H1 (cell line): ENCODE measurements at regions of chr2 and their contacts with region 1.

Region 1: GRCh38 chr2:20446917-20447436 is at the start of gene RHOB:
- DNase-seq: peak; percentile 94 to 95
- H3K4me3 ChIP-seq: peak within 1 kb of the TSS; percentile 61 to 73 (median 66)
- H3K27ac ChIP-seq: no peak within 1 kb of the TSS; the same call in 1 of the 2 replicates
- H3K4me1 ChIP-seq: peaks cover 9 to 16% (median 13%) of the 10 kb centered on the region in 4 experiments
- H3K27me3 ChIP-seq: peaks cover 15 to 49% (median 37%) of the 10 kb centered on the region in 4 experiments
- CTCF ChIP-seq: no peak
- EP300 ChIP-seq: no peak
- POLR2A ChIP-seq: peak; percentile 96 to 99
- RAD21 ChIP-seq: 0 out of 4 replicates have a peak, but pooled peaks of 1 of the 2 experiments have one; percentile 2
- total RNA-seq, gene RHOB: 9.5 and 13.5 TPM in 2 replicates

Region 2: GRCh38 chr2:20378792-20379519 is 68.0 kb before region 1 on chr2:
- CTCF ChIA-PET with region 1: interaction called, 11 read pairs
- POLR2A ChIA-PET with region 1: interaction called, 10 read pairs
- DNase-seq: peak; percentile 34 to 86
- H3K4me3 ChIP-seq: no peak overlapping the region
- H3K27ac ChIP-seq: no peak overlapping the region
- H3K4me1 ChIP-seq: peaks cover 0 to 5% (median 2%) of the 10 kb centered on the region in 4 experiments; a peak in 5 of 7 replicates
- H3K27me3 ChIP-seq: no peaks in the 10 kb centered on the region
- CTCF ChIP-seq: peak; percentile 77 to 87 (median 85)
- EP300 ChIP-seq: no peak
- POLR2A ChIP-seq: no peak
- RAD21 ChIP-seq: peak; percentile 81 to 85

Region 3: DNA sequence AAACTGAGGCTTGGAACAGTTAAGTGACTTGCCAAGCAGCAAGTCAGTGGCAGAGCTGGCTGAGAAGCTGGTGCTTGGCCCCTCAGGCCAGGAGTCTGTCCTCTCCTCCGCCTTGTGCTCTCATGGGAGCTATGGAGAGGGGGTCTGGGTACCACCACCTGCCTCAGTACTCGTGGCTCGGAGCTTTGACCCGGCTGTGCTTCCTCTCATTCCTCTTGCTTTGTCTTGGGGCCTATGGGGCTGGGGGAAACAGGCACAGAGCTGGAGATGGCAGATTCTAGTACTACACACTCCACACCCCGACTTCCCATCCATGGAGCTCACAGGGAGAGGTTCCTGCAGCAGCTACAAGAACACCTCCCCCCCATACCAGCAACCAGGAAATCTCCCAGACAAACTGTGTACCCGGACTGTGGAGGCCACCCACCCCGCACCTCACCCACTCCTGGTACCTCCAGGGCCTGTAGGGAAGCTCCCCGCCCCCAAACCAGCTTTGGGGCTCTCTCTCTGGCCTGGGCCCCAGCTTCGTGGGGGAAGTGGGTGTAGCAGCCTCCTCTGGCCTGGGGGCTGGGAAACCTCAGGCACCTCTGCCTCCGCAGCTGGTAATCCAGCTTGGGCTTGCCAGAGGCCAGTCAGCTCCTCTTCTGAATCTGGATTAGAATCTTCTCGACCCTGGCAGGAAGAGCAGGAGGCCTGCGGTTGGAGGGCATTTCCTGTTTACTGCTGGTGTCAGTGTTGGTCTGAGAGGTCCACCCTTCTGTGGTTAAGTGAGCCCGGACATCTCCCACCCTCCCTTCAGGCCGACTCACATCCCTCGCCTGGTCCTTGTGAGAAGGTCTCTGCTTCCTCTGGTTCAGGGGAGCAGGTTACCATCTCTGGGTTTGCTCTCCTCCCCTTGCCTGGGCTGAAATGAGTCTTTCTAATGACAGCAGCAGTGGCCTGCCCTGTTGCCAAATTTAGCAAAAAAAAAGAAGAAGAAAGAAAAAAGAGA is 22.4 kb before region 1 on chr2:
- CTCF ChIA-PET with region 1: interaction called, 129 read pairs
- POLR2A ChIA-PET with region 1: interaction called, 12 read pairs
- DNase-seq: no peak
- H3K4me3 ChIP-seq: no peak overlapping the region
- H3K27ac ChIP-seq: no peak overlapping the region; the same call in 1 of the 2 replicates
- H3K4me1 ChIP-seq: no peaks in the 10 kb centered on the region; a peak in 1 of 7 replicates
- H3K27me3 ChIP-seq: no peaks in the 10 kb centered on the region
- CTCF ChIP-seq: no peak
- EP300 ChIP-seq: no peak
- POLR2A ChIP-seq: no peak
- RAD21 ChIP-seq: no peak

Region 4: DNA sequence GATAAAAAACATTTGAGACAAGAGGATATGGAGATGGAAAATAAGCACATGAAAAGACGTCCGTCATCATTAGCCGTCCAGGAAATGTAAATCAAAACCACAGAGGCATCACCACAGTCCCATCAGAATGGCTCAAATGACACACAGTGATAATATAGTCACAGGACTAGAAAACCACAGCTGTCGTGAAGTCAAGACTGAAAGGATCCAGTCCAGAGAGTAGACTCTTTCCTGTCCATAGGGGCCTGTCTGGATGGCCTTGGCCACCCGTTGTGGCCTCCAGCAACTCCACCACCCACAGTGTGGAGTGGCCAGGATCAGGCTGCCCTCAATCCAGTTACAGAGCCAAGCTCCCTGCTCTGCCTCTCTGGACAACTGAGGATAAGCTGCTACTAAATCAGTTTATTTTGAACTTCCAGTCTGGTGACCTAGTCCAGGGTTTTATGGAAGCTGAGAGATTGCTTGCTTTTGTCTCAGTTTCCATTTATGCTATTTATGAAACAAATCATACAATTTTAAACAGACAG is 60.3 kb after region 1 on chr2:
- CTCF ChIA-PET with region 1: interaction called, 3 read pairs
- POLR2A ChIA-PET with region 1: interaction called, 17 read pairs
- DNase-seq: no peak
- H3K4me3 ChIP-seq: no peak overlapping the region
- H3K27ac ChIP-seq: no peak overlapping the region
- H3K4me1 ChIP-seq: no peaks in the 10 kb centered on the region
- H3K27me3 ChIP-seq: no peaks in the 10 kb centered on the region
- CTCF ChIP-seq: no peak
- EP300 ChIP-seq: no peak
- POLR2A ChIP-seq: no peak
- RAD21 ChIP-seq: no peak

Region 5: DNA sequence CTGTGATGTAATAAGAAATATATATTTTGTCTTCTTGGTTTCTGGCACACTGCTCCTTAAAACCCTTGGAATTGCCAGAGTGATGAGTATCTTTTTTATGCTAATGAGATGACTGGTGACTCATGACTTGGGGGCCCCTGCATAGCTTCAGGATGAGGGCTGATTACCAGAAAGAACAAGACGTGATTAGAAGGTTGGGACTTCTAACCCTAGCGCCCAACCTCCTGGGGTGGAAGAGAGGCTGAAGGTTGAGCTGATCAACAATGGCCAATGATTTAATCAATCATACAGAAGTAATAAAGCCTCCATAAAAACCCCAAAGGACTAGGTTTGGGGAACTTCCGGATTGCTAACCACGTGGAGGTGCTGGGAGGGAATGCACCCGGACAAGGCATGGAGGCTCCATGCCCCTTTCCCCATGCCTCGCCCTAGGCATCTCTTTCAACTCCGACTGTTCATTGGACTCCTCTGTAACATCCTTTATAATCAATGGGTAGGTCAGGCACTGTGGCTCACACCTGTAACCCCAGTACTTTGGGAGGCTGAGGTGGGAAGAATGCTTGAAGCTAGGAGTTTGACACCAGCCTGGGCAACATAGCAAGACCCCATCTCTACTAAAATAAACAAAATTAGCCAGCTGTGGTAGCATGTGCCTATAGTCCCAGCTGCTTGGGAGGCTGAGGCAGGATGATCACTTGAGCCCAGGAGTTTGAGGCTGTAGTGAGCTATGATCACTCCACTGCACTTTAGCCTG is 114.9 kb after region 1 on chr2:
- CTCF ChIA-PET with region 1: interaction called, 6 read pairs
- POLR2A ChIA-PET with region 1: interaction called, 20 read pairs
- DNase-seq: no peak
- H3K4me3 ChIP-seq: no peak overlapping the region
- H3K27ac ChIP-seq: no peak overlapping the region
- H3K4me1 ChIP-seq: peaks cover 6 to 19% (median 11%) of the 10 kb centered on the region in 4 experiments; a peak in 6 of 7 replicates
- H3K27me3 ChIP-seq: no peaks in the 10 kb centered on the region; a peak in 2 of 7 replicates
- CTCF ChIP-seq: no peak
- EP300 ChIP-seq: no peak
- POLR2A ChIP-seq: no peak
- RAD21 ChIP-seq: no peak

Region 6: GRCh38 chr2:20611077-20611843 is 164.3 kb after region 1 on chr2:
- CTCF ChIA-PET with region 1: interaction called, 15 read pairs
- POLR2A ChIA-PET with region 1: interaction called, 18 read pairs
- DNase-seq: no peak
- H3K4me3 ChIP-seq: no peak overlapping the region
- H3K27ac ChIP-seq: no peak overlapping the region
- H3K4me1 ChIP-seq: peaks cover 0 to 14% (median 10%) of the 10 kb centered on the region in 4 experiments; a peak in 6 of 7 replicates
- H3K27me3 ChIP-seq: no peaks in the 10 kb centered on the region; a peak in 1 of 7 replicates
- CTCF ChIP-seq: no peak
- EP300 ChIP-seq: no peak
- POLR2A ChIP-seq: no peak
- RAD21 ChIP-seq: no peak

Region 7: DNA sequence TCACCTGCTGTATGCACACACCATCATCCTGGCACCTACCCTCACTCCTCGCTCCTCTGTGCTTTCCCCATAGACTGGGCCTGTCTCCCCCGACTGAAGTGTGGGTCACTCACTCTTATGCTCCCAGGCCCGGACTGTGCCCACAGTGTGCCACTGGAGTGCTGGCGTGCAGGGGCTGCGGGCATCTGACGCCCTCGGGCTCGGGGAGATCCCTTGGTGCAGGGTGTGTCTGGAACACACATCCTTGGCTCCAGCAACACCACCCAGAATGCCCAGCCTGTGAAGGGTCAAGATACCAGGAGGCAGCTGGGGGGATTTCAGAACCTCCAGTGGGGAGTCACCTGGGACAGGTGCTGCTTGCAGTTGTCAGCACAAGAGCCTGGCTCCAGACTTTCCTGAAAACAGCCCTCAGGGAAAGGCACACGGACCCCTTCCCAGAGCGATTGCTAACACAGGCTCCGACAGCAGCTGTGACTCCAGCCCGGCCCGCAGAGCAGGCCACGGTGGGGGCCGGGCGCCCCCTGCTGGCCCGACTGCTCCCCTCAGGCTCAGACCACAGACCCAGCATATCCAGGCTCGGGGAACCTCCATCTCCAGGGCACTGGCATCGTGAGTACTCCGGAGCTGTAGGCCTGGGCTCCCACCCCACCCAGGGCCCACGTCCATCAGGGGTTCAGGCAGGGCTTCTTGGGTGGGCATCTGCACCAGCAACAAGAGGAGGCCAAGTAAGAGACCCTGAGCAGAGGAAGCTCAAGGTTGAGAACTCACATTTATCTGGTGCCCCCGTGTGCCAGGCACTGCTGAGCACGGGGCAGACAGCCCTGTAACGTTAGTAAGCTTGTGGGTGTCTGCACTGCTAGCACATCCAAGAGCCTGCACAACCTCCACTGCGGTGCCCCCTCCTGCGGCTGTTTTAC is 195.3 kb after region 1 on chr2:
- CTCF ChIA-PET with region 1: interaction called, 367 read pairs
- POLR2A ChIA-PET with region 1: interaction called, 15 read pairs
- DNase-seq: peak; percentile 50 to 91
- H3K4me3 ChIP-seq: no peak overlapping the region
- H3K27ac ChIP-seq: no peak overlapping the region
- H3K4me1 ChIP-seq: no peaks in the 10 kb centered on the region
- H3K27me3 ChIP-seq: no peaks in the 10 kb centered on the region
- CTCF ChIP-seq: peak in 2 of 3 experiments; percentile 95; a peak in 3 of 4 replicates
- EP300 ChIP-seq: no peak
- POLR2A ChIP-seq: no peak
- RAD21 ChIP-seq: peak; percentile 93 to 95